Right ventricle myocardium inferior (tissue), 1 donor: ENCODE measurements at regions of chrX and their contacts with region 1.

Region 1: GRCh38 chrX:119516157-119516702 is 48.0 kb downstream of the SLC25A5 start:
- DNase-seq: no peak
- ATAC-seq: peak; percentile 70

Region 2: GRCh38 chrX:119105826-119106225 is 410.4 kb before region 1 on chrX:
- intact Hi-C with region 1: no loop called
- DNase-seq: no peak
- ATAC-seq: no peak

Region 3: DNA sequence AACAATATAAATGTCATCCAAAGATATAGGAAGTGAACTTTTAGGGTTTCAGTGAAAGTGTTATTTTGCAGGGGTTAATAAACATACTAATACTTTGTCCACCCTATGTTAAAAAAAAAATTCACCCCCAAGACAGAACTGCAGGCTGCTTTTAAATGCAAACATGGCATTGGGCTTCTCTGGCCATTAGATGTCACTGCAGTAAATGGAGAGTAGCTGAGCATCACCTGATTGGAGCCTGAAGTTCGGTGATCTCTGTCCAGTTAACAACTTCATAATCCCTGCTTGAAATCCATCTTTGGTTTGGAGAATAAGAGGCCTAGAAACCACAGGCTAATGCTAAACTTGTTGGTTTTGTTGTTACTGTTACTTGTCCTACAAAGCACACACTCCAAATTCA is 98.4 kb before region 1 on chrX:
- intact Hi-C with region 1: loop called (anchors 1 kb)
- DNase-seq: no peak
- ATAC-seq: no peak

Region 4: DNA sequence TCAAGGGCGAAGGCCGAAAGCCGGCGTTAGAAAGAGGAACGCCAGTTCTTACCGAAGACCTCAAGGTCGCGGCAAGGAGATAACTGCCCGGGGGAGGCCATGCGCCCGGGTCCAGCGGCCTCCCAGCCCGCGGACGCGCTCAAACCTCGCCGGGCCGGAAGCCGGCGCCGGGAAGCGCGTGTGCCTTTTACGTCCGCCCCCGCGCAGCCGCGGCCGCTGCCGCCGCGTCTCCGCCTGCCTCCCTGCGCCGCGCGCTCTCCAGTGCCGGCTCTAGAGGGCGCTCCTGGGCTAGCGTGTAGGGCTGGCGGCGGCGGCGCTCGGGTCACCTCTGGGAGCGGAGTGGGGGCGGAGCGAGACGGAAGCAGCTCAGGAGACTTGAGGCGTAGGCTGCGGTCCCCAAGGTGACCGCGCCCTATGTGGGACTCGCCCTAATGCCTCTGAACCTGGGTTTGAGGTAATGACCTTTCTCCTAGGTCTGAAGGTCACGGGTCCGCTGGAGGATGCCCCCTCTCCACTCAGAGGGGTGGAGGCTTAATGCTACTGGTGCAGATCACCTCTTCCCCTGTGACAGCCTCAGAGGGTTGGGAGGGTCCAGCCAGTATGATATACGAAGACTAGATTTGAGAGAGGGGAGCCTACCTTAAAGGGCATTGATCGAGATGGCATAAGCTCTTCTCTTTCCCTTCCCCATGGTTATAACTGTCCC is 47.1 kb before region 1 on chrX:
- intact Hi-C with region 1: loop called (anchors 5 kb)
- DNase-seq: peak; percentile 95
- ATAC-seq: peak; percentile 92

Region 5: DNA sequence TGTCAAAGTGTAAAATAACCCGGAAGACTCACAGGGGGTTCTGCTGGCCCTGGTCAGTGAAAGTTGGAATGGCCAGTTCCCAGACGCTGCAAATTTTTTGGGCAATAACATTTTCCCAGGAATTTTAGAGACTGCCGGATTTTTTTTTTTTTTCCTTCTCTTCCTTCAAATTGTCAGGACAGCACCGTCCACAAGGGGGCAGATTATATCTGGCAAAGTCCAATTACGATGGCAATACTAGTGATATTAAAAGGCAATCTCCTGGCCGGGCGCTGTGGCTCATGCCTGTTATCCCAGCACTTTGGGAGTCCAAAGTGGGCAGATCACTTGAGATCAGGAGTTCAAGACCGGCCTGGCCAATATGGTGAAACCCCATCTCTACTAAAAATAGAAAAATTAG is 27.5 kb before region 1 on chrX:
- intact Hi-C with region 1: loop called (anchors 2 kb)
- DNase-seq: peak; percentile 35
- ATAC-seq: no peak

Region 6: GRCh38 chrX:119606280-119607015 is 90.2 kb after region 1 on chrX and contains the start of gene NKRF:
- intact Hi-C with region 1: loop called (anchors 10 kb)
- DNase-seq: peak; percentile 97
- ATAC-seq: peak; percentile 96
- total RNA-seq, gene NKRF: 4.2 TPM

Region 7: DNA sequence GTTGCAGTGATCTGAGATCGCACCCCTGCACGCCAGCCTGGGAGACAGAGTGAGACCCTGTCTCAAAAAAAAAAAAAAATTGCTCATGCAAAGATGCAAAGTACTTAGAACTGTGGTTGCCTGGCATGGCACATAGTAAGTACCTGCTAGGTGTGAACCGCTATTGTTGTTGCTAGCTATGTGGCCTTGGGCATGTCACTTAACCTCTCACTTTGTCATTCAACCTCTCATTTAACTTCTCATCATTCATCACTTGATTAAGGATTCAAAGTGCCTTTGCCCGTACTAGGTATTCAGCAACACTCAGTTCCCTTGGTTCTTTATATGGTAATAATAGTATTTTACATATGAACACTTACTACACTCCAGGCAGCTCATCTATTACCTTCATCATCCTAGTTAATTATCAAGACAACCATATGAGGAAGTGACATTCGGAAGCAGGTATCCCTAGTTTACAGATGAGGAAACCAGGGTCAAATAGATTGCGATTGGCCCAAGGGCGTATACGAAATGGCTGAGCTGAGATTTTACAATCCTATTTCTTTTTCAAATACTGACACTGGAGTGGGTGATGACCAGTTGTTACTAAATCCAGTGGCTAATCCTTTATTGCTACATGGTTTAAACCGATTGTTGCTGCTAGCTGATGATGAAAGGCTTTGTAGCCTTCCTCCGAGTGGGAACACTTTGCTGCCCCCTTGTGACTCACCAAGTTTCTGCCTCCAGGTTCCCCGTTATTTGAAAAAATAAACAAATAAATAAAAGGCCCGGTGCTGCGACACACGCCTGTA is 213.4 kb after region 1 on chrX:
- intact Hi-C with region 1: loop called (anchors 2 kb)
- DNase-seq: no peak
- ATAC-seq: no peak

Region 8: DNA sequence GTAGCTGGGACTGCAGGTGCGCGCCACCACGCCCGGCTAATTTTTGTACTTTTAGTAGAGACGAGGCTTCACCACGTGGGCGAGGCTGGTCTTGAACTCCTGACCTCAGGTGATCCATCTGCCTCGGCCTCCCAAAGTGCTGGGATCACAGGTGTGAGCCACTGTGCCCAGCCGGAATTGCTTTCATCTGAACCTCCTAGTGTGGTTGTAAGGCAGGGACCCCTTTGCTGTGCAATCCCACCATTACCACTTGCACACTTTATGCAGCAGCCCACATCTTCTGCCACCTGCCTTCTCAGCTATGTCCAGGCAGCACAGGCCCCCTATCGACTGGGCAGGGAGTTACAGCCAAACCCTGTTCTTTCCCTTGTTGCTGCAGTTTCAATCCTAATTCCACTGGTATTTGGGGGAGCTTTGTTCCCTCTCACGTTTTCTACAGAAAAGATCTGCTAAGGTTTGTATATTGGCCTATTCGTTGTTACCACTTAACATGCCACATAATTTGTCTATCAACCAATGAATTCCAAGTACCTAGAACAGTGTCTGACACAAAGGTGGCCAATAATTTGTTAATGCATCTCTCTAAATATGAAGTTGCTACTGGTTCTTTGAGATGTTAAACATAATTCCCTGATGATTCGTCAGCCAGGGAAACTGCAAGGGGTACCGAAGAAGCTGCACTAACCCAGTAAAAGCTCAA is 268.7 kb after region 1 on chrX:
- intact Hi-C with region 1: loop called (anchors 10 kb)
- DNase-seq: no peak
- ATAC-seq: no peak

Region 9: DNA sequence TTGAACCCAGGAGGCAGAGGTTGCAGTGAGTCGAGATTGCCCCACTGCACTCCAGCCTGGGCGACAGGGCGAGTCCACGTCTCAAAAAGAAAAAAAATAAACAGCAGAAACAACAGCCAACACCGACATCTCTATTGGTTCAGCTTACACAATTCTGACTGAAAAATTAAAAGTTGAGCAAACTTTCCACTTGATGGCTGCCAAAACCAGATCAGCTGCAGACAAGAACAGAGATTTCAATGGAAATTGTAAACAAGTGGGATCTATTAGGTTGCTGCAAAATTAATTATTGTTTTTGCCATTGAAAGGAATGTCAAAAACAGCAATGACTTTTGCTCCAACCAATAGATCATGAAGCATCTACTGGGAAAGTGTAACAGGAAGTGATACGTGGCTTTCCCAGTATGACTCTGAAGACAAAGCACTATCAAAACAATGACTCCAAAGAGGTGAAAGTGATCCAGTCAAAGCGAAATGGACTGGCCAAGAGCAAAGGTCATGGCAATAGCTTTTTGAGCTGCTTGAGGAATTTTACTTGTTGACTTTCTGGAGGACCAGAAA is 310.2 kb after region 1 on chrX:
- intact Hi-C with region 1: no loop called
- DNase-seq: no peak
- ATAC-seq: no peak